Natural killer cell (primary cell): ENCODE measurements at regions of chr20 and their contacts with region 1.

Region 1: GRCh38 chr20:32484958-32485769 is 100.0 kb downstream of the NOL4L start:
- DNase-seq: peak; percentile 72 to 92
- ATAC-seq: peak; percentile 79 to 87 (median 79)
- H3K4me3 ChIP-seq: peak overlapping the region; percentile 32
- H3K4me3 Mint-ChIP-seq: peak overlapping the region; percentile 97
- H3K27ac ChIP-seq: peak overlapping the region; percentile 49
- H3K27ac Mint-ChIP-seq: peak overlapping the region; percentile 88 to 91
- H3K4me1 ChIP-seq: peaks cover 34% of the 10 kb centered on the region
- H3K4me1 Mint-ChIP-seq: peaks cover 45 to 59% of the 10 kb centered on the region in 2 donors
- H3K27me3 ChIP-seq: no peaks in the 10 kb centered on the region
- H3K27me3 Mint-ChIP-seq: no peaks in the 10 kb centered on the region
- CTCF ChIP-seq: peak; percentile 74

Region 2: GRCh38 chr20:32277361-32278198 is 207.6 kb before region 1 on chr20 and contains the start of gene KIF3B:
- intact Hi-C with region 1: loop called (anchors 10 kb)
- DNase-seq: peak; percentile 75 to 93
- ATAC-seq: peak; percentile 90 to 97 (median 91)
- H3K4me3 ChIP-seq: peak within 1 kb of the TSS; percentile 93
- H3K4me3 Mint-ChIP-seq: peak within 1 kb of the TSS; percentile 87
- H3K27ac ChIP-seq: peak within 1 kb of the TSS; percentile 71
- H3K27ac Mint-ChIP-seq: peak within 1 kb of the TSS; percentile 82 to 88
- H3K4me1 ChIP-seq: peaks cover 21% of the 10 kb centered on the region
- H3K4me1 Mint-ChIP-seq: peaks cover 19 to 21% of the 10 kb centered on the region in 2 donors
- H3K27me3 ChIP-seq: no peaks in the 10 kb centered on the region
- H3K27me3 Mint-ChIP-seq: peaks cover 0 to 6% of the 10 kb centered on the region in 2 donors
- CTCF ChIP-seq: no peak
- total RNA-seq, gene KIF3B: 10.2 to 14.3 (median 13.2) TPM

Region 3: GRCh38 chr20:32357869-32358631 is 127.1 kb before region 1 on chr20 and contains the start of gene ASXL1:
- intact Hi-C with region 1: loop called (anchors 5 kb)
- DNase-seq: peak; percentile 84 to 96
- ATAC-seq: peak; percentile 91 to 98 (median 95)
- H3K4me3 ChIP-seq: peak within 1 kb of the TSS; percentile 99
- H3K4me3 Mint-ChIP-seq: peak within 1 kb of the TSS; percentile 97
- H3K27ac ChIP-seq: peak within 1 kb of the TSS; percentile 99
- H3K27ac Mint-ChIP-seq: peak within 1 kb of the TSS; percentile 94 to 95
- H3K4me1 ChIP-seq: peaks cover 21% of the 10 kb centered on the region
- H3K4me1 Mint-ChIP-seq: peaks cover 29 to 46% of the 10 kb centered on the region in 2 donors
- H3K27me3 ChIP-seq: no peaks in the 10 kb centered on the region
- H3K27me3 Mint-ChIP-seq: no peaks in the 10 kb centered on the region
- CTCF ChIP-seq: no peak
- total RNA-seq, gene ASXL1: 106 to 125 (median 108) TPM

Region 4: DNA sequence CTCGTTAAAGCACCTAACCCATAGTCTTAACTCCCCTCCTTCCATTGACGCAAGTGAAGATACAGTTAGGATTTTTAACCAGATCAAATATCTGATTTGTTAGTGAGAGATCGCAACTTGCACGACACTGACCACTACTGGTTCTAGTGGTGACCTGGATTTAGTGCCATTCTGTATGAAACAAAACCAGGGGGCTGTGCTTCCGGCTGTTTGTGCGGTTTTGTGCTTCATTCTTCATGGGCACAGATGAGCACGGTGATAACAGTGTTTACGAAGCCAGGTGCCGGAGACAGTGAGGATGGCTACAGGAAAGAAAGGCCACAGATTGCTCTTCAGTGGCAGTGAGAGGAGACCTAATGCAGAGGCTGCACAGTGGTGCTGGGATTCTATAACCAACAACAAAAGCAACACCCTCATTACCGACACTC is 24.5 kb after region 1 on chr20:
- intact Hi-C with region 1: loop called (anchors 1 kb)
- DNase-seq: peak; percentile 37 to 88
- ATAC-seq: peak; percentile 81 to 87 (median 84)
- H3K4me3 ChIP-seq: no peak overlapping the region
- H3K4me3 Mint-ChIP-seq: peak overlapping the region; percentile 86
- H3K27ac ChIP-seq: peak overlapping the region; percentile 79
- H3K27ac Mint-ChIP-seq: peak overlapping the region; percentile 93
- H3K4me1 ChIP-seq: peaks cover 75% of the 10 kb centered on the region
- H3K4me1 Mint-ChIP-seq: peaks cover 55 to 82% of the 10 kb centered on the region in 2 donors
- H3K27me3 ChIP-seq: no peaks in the 10 kb centered on the region
- H3K27me3 Mint-ChIP-seq: no peaks in the 10 kb centered on the region
- CTCF ChIP-seq: peak; percentile 13

Region 5: GRCh38 chr20:32560989-32561830 is 76.0 kb after region 1 on chr20:
- intact Hi-C with region 1: no loop called
- DNase-seq: peak; percentile 38 to 52
- ATAC-seq: peak; percentile 67 to 81 (median 76)
- H3K4me3 ChIP-seq: no peak overlapping the region
- H3K4me3 Mint-ChIP-seq: peak overlapping the region; percentile 81
- H3K27ac ChIP-seq: peak overlapping the region; percentile 77
- H3K27ac Mint-ChIP-seq: peak overlapping the region; percentile 92 to 93
- H3K4me1 ChIP-seq: peaks cover 92% of the 10 kb centered on the region
- H3K4me1 Mint-ChIP-seq: peaks cover 71 to 82% of the 10 kb centered on the region in 2 donors
- H3K27me3 ChIP-seq: no peaks in the 10 kb centered on the region
- H3K27me3 Mint-ChIP-seq: no peaks in the 10 kb centered on the region
- CTCF ChIP-seq: no peak

Region 6: GRCh38 chr20:33097001-33097400 is 611.8 kb after region 1 on chr20:
- intact Hi-C with region 1: no loop called
- DNase-seq: no peak
- ATAC-seq: no peak
- H3K4me3 ChIP-seq: no peak overlapping the region
- H3K4me3 Mint-ChIP-seq: no peak overlapping the region
- H3K27ac ChIP-seq: no peak overlapping the region
- H3K27ac Mint-ChIP-seq: no peak overlapping the region
- H3K4me1 ChIP-seq: no peaks in the 10 kb centered on the region
- H3K4me1 Mint-ChIP-seq: no peaks in the 10 kb centered on the region
- H3K27me3 ChIP-seq: no peaks in the 10 kb centered on the region
- H3K27me3 Mint-ChIP-seq: peaks cover 0 to 7% of the 10 kb centered on the region in 2 donors
- CTCF ChIP-seq: no peak